OCI-LY7 (cell line): ENCODE measurements at regions of chr19 and their contacts with region 1.

Region 1: DNA sequence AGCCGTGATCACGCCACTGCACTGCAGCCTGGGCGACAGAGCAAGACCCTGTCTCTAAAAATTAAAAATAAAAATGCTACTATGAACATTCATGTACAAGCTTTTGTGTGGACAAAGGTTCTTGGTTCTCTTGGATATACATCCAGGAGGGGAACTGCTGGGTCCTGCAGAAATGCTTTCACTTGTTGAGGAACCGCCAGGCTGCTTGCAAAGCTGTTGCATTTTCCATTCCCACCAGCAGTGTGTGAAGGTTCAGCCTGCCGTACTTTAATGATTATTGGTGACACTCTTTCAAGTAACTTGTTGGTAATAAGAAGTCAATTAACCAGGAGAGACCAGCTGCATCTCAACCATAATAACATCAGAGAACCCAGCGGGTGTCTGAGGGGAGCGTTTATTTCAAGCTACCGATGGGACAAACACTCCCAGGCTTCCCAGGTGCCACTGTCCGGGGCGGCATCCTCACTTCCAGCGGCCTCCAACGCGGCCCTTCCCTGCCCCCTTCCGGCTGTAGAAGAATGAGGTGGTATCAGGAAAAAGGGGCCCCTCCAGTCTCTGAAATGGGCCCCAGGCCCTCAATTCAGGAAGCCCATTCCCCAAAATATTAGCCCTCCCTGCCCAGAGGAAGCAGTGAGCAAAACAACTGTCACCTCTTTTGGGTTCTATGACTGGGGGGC is 15.2 kb upstream of the PPP1R12C start:
- DNase-seq: peak; percentile 45
- H3K4me3 ChIP-seq: no peak overlapping the region
- H3K27ac ChIP-seq: peak overlapping the region; percentile 84
- H3K4me1 ChIP-seq: peaks cover 47% of the 10 kb centered on the region
- CTCF ChIP-seq: peak; percentile 77

Region 2: DNA sequence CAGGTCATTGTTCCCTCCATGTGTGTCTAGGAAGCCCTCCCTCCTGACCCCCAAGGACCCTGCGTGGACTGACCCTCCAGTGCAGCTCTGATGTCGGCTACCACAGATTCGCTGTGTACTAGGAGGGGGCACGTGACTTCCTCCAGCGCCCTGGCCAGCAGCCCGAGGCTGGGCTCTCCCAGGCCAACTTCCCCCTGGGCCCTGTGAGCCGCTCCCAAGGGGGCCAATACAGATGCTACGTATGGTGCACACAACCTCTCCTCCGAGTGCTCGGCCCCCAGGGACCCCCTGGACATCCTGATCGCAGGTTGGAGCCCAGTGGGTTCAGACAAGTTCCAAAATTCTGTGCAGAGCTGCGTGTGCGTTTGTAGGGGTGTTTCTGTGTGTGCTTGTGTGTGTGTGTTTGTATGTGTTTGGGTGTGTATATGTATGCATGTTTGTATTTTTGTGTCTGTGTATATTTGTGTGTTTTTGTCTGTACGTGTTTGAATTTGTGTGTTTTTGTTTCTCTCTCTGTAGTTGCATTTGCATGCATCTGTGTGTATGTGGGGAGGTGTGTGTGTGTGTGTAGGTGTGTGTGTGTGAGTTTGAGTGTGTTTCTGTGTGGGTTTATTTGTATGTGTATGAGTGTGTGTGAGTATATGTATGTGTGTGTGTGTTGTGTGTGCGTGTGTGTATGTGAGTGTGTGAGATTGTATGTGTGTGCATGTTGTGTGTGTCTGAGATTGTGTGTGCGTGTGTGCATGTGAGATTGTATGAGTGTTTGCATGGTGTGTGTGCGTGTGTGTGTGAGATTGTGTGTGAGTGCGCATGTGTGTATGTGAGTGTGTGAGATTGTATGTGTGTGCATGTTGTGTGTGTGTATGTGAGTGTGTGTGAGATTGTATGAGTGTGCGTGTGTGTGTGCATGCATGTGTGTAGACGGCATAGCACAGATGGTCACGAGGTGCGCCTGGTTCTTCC is 580.4 kb before region 1 on chr19:
- CTCF ChIA-PET with region 1: no interaction called
- POLR2A ChIA-PET with region 1: no interaction called
- intact Hi-C with region 1: no loop called
- DNase-seq: no peak
- H3K4me3 ChIP-seq: no peak overlapping the region
- H3K27ac ChIP-seq: no peak overlapping the region
- H3K4me1 ChIP-seq: peaks cover 2% of the 10 kb centered on the region
- CTCF ChIP-seq: no peak

Region 3: DNA sequence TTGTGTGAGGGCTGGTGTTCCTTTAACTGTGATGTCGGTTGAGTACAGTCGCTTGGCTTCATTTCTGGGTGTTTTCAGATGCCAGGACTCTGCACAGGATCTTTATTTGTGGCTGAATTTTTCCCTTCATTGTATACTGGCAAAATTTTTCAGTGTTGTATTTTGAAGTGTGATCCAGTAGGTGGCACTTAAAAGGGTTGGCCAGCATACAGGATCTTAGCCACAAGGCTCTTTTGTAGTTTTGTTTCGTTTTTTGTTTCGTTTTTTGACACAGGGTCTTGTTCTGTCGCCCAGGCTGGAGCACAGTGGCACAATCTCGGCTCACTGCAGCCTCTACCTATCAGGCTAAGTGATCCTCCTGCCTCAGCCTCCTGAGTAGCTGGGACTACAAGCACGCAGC is 249.8 kb before region 1 on chr19:
- CTCF ChIA-PET with region 1: interaction called, 4 read pairs
- POLR2A ChIA-PET with region 1: no interaction called
- intact Hi-C with region 1: loop called (anchors 2 kb)
- DNase-seq: peak; percentile 76
- H3K4me3 ChIP-seq: no peak overlapping the region
- H3K27ac ChIP-seq: no peak overlapping the region
- H3K4me1 ChIP-seq: peaks cover 6% of the 10 kb centered on the region
- CTCF ChIP-seq: peak; percentile 71

Region 4: DNA sequence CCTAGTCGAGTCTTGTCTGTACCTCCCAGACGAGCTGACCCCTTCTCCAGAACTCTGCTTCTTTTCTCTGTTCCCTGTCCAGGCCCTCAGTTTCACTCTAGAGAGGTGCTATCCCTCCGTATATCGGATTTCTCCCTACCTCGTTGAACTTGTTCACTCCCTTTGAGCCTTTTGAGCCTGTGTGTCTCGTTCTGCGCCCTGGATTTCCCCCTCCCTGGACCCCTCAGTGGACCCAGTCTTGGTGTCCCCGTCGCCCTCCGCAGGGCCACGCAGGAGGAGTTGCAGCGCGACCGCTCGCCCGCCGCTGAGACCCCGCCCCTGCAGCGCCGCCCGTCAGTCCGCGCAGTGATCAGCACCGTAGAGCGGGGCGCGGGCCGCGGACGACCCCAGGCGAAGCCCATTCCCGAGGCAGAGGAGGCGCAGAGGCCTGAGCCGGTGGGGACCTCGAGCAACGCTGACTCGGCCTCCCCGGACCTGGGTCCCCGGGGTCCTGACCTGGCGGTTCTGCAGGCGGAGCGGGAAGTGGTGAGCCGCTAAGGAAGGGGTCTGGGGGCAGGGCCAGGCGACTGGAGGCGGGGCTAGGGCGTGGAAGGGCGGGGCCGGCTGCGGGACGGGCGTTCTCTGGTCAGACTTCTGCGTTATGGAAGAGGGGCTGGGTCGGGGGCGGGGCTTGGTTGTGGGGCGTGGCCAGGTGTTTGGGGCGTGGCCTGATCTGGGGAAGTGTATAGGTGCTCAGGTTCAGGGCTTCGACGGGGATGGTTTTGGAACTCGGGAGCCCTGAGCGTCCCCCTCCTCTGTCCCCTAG is 51.4 kb before region 1 on chr19:
- CTCF ChIA-PET with region 1: no interaction called
- POLR2A ChIA-PET with region 1: interaction called, 3 read pairs
- intact Hi-C with region 1: loop called (anchors 2 kb)
- DNase-seq: peak; percentile 90
- H3K4me3 ChIP-seq: peak overlapping the region; percentile 70
- H3K27ac ChIP-seq: peak overlapping the region; percentile 56
- H3K4me1 ChIP-seq: peaks cover 20% of the 10 kb centered on the region
- CTCF ChIP-seq: no peak; the same call in 1 of the 2 replicates

Region 5: DNA sequence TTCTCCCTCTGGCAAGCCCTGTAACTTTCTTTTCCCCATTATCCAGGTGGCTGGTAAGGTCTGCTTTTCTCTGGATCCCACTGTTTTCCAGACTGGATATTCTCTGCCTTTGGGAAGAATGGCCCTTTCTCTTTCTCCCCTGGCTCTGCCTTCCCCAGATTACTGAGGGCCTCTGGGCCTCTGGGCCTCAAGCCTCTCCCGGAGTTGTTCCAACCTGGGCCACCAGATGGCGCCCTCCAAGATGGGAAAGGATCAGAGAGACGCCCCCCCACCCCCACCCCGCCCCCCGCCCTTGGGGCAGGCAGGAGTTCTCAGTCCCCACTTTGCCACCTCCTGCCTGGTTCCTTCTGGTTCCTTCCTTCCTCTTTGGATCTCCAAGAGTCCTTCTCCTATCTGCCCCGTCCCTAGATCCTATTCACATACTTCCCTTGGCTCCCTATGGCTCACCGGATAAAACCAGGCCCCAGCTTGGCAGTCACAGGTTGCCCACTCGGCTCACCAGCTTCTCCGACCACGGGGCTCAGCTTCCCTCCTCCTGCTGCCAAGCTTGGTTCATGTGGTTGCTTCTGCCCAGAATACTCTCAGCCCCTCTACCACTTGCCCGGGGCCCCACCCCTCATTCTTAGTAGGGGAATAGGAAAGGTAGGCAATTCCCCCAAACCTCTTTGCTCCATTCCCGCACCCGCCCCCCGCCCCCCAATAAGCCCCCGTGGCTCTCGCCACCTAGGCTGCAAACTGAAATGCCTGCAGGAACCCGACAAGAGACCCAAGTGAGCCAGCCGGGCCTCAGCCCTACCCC is 43.8 kb before region 1 on chr19:
- CTCF ChIA-PET with region 1: interaction called, 4 read pairs
- POLR2A ChIA-PET with region 1: no interaction called
- intact Hi-C with region 1: loop called (anchors 1 kb)
- DNase-seq: peak; percentile 73
- H3K4me3 ChIP-seq: no peak overlapping the region
- H3K27ac ChIP-seq: no peak overlapping the region
- H3K4me1 ChIP-seq: no peaks in the 10 kb centered on the region
- CTCF ChIP-seq: peak; percentile 75

Region 6: DNA sequence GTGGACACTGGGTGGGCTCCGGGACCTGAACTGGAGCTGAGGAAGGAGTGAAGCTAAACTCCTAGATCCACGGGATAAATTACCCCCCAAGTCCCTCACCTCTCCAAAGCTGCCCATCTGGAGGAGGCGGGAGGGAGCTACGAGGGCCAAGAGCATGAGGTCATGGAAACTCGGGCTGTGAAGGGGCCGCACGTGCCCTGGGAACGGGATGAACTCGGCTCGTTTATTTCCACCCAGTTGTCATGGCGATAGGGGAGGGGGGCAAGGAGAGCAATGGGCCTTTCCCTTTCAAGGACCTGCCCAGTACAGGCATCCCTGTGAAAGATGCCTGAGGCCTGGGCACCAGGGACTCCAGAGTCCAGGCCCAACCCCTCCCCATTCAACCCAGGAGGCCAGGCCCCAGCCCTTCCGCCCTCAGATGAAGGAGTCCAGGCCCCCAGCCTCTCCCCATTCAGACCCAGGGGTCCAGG is 19.0 kb before region 1 on chr19:
- CTCF ChIA-PET with region 1: no interaction called
- POLR2A ChIA-PET with region 1: no interaction called
- intact Hi-C with region 1: loop called (anchors 1 kb)
- DNase-seq: peak; percentile 60
- H3K4me3 ChIP-seq: peak overlapping the region; percentile 86
- H3K27ac ChIP-seq: peak overlapping the region; percentile 84
- H3K4me1 ChIP-seq: peaks cover 41% of the 10 kb centered on the region
- CTCF ChIP-seq: no peak

Region 7: GRCh38 chr19:55146078-55146704 is 13.6 kb after region 1 on chr19:
- CTCF ChIA-PET with region 1: no interaction called
- POLR2A ChIA-PET with region 1: no interaction called
- intact Hi-C with region 1: no loop called
- DNase-seq: peak; percentile 66
- H3K4me3 ChIP-seq: peak overlapping the region; percentile 65
- H3K27ac ChIP-seq: no peak overlapping the region
- H3K4me1 ChIP-seq: peaks cover 43% of the 10 kb centered on the region
- CTCF ChIP-seq: peak; percentile 85